ENCODE measurements at regions of chr9 and their contacts with region 1.

Region 1: GRCh38 chr9:30713243-30713642 is 1671.2 kb upstream of the ACO1 start:
- DNase-seq: no peak
- ATAC-seq: no peak
- H3K4me3 ChIP-seq: no peak overlapping the region
- H3K27ac ChIP-seq: no peak overlapping the region
- H3K4me1 ChIP-seq: no peaks in the 10 kb centered on the region
- H3K27me3 ChIP-seq: no peaks in the 10 kb centered on the region
- CTCF ChIP-seq: no peak

Region 2: GRCh38 chr9:30774326-30774725 is 61.1 kb after region 1 on chr9:
- intact Hi-C with region 1: loop called in 1 of 10 experiments (anchors 10 kb)
- DNase-seq: no peak
- ATAC-seq: no peak
- H3K4me3 ChIP-seq: no peak overlapping the region
- H3K27ac ChIP-seq: no peak overlapping the region
- H3K4me1 ChIP-seq: no peaks in the 10 kb centered on the region
- H3K27me3 ChIP-seq: no peaks in the 10 kb centered on the region
- CTCF ChIP-seq: no peak